CD4-positive, alpha-beta memory T cell (primary cell): ENCODE measurements at regions of chr20 and their contacts with region 1.

Region 1: DNA sequence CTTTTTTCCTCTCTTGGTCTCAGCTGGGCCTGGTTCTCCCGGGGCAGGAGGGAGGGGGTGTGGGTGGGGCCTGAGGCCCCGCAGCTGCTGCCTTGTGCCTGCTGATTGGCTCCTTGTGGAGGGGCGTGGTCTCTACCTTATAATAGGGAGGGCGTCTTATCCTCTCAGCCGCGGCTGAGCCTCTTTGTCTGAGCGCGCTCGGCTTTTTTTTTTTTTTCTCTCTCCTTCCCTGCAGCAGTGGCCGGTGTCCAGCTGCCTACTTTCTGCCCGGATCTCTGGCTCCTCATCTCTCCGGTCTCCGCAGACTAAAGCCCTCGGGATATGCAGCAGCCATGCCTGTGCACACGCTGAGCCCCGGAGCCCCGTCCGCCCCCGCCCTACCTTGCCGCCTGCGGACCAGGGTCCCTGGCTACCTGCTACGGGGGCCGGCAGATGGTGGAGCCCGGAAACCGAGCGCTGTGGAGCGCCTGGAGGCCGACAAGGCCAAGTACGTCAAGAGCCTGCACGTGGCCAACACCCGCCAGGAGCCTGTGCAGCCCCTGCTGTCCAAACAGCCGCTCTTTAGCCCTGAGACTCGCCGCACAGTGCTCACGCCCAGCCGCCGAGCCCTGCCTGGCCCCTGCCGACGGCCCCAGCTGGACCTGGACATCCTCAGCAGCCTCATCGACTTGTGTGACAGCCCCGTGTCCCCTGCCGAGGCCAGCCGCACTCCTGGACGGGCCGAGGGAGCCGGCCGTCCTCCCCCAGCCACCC is 11.1 kb downstream of the FAM110A start:
- DNase-seq: peak; percentile 81 to 96 (median 86)
- H3K4me3 ChIP-seq: peak overlapping the region; percentile 67 to 74
- H3K4me3 Mint-ChIP-seq: peak overlapping the region; percentile 87 to 93 (median 90)
- H3K27ac ChIP-seq: peak overlapping the region; percentile 70
- H3K27ac Mint-ChIP-seq: peak overlapping the region; percentile 70 to 89 (median 83)
- H3K4me1 ChIP-seq: peaks cover 68% of the 10 kb centered on the region
- H3K4me1 Mint-ChIP-seq: peaks cover 27 to 62% (median 45%) of the 10 kb centered on the region in 4 donors
- H3K27me3 ChIP-seq: no peaks in the 10 kb centered on the region
- H3K27me3 Mint-ChIP-seq: no peaks in the 10 kb centered on the region

Region 2: GRCh38 chr20:856361-857040 is 11.9 kb after region 1 on chr20:
- CTCF ChIA-PET with region 1: interaction called, 5 read pairs
- POLR2A ChIA-PET with region 1: interaction called, 12 read pairs
- intact Hi-C with region 1: no loop called
- DNase-seq: peak; percentile 28 to 66 (median 38)
- H3K4me3 ChIP-seq: no peak overlapping the region
- H3K4me3 Mint-ChIP-seq: peak overlapping the region in 7 of 8 donors; percentile 38 to 72 (median 60)
- H3K27ac ChIP-seq: peak overlapping the region; percentile 14
- H3K27ac Mint-ChIP-seq: peak overlapping the region; percentile 37 to 90 (median 71)
- H3K4me1 ChIP-seq: peaks cover 49% of the 10 kb centered on the region
- H3K4me1 Mint-ChIP-seq: peaks cover 24 to 71% (median 51%) of the 10 kb centered on the region in 4 donors
- H3K27me3 ChIP-seq: no peaks in the 10 kb centered on the region
- H3K27me3 Mint-ChIP-seq: no peaks in the 10 kb centered on the region